ENCODE measurements at regions of chr9 and their contacts with region 1.

Region 1: GRCh38 chr9:20622330-20623020 is at the start of gene MLLT3:
- DNase-seq: peak; percentile 97
- H3K4me3 Mint-ChIP-seq: peak within 1 kb of the TSS; percentile 88
- H3K27ac Mint-ChIP-seq: peak within 1 kb of the TSS; percentile 99
- H3K4me1 Mint-ChIP-seq: peaks cover 52% of the 10 kb centered on the region
- H3K27me3 Mint-ChIP-seq: no peaks in the 10 kb centered on the region
- total RNA-seq, gene MLLT3: 33.8 and 36.4 TPM in 2 replicates

Region 2: DNA sequence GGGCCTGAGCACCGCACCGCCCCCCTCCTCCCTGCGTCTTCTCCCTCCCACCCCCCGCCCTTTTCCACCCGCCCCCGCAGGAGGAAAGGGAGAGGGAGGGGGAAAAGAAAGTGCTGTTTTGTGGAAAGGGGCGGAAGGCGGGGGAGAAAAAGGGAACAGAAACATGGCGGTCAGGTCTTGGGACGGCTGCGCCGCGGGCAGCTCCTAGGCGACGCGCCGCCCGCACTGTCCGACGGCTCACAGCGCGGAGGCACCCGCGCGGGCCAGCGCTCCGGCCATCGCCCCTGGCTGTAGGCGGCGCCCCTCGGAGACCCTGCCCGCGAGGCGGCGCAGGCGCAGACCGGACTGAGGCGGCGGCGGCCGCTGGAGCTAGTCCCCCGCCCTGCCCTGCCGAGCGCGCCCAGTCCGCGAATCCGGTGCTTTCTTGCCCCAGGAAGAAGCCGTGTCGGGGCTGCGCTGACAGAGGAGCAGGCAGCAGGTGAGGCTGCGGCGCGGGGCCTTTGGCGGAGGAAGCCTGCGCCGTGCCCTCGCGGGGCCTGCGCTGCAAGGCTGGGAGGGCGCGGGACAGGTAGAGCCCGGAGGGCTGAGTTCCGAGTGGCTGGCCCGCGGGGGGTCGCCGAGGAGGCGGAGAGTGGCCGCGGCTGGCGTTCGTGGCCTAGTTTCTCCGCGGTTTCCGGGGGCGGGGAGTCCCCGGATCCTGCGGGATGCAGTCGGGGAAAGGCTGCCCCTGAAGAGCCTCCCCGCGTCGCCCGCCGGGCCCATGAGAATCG is 1391.9 kb before region 1 on chr9 and contains the start of gene DENND4C:
- intact Hi-C with region 1: loop called (anchors 2 kb)
- DNase-seq: peak; percentile 83
- H3K4me3 Mint-ChIP-seq: peak within 1 kb of the TSS; percentile 77
- H3K27ac Mint-ChIP-seq: peak within 1 kb of the TSS; percentile 73
- H3K4me1 Mint-ChIP-seq: peaks cover 8% of the 10 kb centered on the region
- H3K27me3 Mint-ChIP-seq: no peaks in the 10 kb centered on the region
- total RNA-seq, gene DENND4C: 18.4 and 21.1 TPM in 2 replicates

Region 3: DNA sequence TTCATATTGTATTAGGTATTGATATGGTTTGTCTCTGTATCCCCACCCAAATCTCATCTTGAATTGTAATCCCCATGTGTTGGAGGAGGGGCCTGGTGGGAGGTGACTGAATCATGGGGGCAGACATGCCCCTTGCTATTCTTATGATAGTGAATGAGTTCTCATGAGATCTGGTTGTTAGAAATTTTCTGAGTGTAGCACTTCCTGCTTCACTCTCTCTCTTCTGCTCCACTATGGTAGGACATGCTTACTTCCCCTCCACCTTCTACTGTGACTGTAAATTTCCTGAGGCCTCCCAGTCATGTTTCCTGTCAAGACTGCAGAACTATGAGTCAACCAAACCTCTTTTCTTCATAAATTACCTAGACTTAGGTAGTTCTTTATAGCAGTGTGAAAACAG is 646.2 kb before region 1 on chr9:
- intact Hi-C with region 1: loop called (anchors 1 kb)
- DNase-seq: peak; percentile 47
- H3K4me3 Mint-ChIP-seq: peak overlapping the region; percentile 1
- H3K27ac Mint-ChIP-seq: peak overlapping the region; percentile 92
- H3K4me1 Mint-ChIP-seq: peaks cover 51% of the 10 kb centered on the region
- H3K27me3 Mint-ChIP-seq: no peaks in the 10 kb centered on the region

Region 4: DNA sequence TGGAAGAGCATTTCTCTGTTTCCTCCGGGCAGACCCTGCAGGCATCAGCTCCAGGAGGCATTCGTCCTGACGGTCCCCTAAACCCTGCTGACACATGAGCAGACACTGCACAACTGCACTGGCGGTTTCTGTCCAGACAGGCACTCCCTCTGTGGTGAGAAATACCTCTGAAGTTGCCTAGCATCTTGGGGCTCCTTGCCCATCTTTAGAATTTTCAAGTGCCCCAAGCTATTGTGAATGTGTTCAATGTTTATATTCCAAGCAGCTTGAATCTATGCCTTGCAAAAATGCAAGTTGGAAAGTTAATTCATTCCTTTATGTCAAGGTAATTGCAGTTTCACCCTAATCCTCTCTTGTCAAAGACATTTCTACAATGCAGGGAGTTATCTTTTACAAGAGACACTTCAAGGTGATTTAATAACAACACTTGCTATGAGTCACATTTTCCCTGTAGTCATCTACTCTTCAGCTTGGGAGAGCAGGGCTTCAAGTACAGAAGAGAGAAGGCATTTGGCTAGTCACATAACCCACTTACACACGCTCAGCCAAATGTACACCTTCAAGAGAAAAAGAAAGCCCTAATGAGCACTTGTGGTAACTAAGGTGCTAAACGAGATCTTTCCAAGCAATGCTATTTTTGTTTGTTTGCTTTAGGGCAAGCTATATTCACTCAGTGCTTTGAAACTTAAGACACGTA is 302.7 kb before region 1 on chr9:
- intact Hi-C with region 1: loop called (anchors 1 kb)
- DNase-seq: peak; percentile 37
- H3K4me3 Mint-ChIP-seq: peak overlapping the region; percentile 35
- H3K27ac Mint-ChIP-seq: peak overlapping the region; percentile 91
- H3K4me1 Mint-ChIP-seq: peaks cover 91% of the 10 kb centered on the region
- H3K27me3 Mint-ChIP-seq: no peaks in the 10 kb centered on the region

Region 5: DNA sequence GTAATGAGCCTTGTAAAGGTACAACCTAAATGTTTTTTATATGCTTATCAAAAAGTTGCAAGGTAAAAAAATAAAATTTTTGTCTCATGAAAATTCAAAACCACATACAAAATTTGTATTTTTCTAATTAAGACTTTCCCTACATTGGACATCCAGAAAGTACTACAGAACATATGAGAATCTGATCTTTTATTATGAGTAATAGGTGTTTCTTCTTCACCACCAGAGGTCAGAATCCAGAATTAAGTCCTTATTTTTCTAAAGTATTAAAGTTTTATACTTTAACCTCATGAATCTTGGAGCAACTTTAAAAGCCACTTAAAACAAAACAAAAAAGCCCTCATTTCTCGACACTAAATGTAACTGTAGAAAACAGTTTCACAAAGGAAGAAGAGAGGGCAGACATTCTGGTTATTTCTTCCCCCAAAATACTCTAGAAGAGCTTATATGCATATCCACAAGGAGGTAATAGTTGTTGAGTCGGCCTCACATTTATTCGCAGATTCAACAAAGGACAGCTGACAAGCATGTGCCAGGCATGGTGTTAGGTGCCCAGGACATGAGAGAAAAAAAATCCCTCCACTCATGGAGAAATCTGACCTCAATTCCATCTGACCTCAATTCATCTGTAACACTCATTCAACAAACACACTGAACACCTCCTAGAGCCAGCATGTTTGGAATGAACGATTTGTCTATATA is 69.5 kb before region 1 on chr9:
- intact Hi-C with region 1: loop called (anchors 1 kb)
- DNase-seq: peak; percentile 1
- H3K4me3 Mint-ChIP-seq: peak overlapping the region; percentile 59
- H3K27ac Mint-ChIP-seq: peak overlapping the region; percentile 64
- H3K4me1 Mint-ChIP-seq: peaks cover 76% of the 10 kb centered on the region
- H3K27me3 Mint-ChIP-seq: no peaks in the 10 kb centered on the region

Region 6: DNA sequence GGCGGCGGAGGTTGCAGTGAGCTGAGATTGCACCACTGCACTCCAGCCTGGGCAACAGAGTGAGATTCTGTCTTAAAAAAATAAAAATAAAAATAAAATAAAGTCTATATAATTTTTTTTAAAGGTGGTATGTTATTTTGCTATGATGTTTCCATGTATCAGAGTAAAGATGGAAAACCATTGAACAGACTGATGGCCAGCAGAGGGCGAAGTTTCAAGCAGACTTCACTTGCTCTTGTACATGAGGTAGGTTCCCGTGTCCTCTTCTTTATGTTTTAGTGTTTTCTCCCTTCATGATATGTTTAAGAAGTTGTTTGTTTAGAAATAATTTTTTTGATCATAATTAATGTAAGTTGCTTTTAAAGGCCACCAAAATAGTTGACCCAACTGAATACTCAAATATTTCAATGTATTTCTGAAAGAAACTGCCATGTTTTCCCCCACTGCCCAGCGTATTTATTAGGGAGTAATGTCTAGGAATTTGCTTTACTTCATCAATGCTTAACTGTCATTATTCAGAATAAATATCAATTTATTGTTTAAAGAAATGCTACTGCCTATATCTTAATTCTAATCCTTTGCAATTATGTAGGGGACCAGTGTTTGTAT is 262.6 kb after region 1 on chr9:
- intact Hi-C with region 1: loop called (anchors 1 kb)
- DNase-seq: peak; percentile 12
- H3K4me3 Mint-ChIP-seq: no peak overlapping the region
- H3K27ac Mint-ChIP-seq: no peak overlapping the region
- H3K4me1 Mint-ChIP-seq: no peaks in the 10 kb centered on the region
- H3K27me3 Mint-ChIP-seq: no peaks in the 10 kb centered on the region

Region 7: DNA sequence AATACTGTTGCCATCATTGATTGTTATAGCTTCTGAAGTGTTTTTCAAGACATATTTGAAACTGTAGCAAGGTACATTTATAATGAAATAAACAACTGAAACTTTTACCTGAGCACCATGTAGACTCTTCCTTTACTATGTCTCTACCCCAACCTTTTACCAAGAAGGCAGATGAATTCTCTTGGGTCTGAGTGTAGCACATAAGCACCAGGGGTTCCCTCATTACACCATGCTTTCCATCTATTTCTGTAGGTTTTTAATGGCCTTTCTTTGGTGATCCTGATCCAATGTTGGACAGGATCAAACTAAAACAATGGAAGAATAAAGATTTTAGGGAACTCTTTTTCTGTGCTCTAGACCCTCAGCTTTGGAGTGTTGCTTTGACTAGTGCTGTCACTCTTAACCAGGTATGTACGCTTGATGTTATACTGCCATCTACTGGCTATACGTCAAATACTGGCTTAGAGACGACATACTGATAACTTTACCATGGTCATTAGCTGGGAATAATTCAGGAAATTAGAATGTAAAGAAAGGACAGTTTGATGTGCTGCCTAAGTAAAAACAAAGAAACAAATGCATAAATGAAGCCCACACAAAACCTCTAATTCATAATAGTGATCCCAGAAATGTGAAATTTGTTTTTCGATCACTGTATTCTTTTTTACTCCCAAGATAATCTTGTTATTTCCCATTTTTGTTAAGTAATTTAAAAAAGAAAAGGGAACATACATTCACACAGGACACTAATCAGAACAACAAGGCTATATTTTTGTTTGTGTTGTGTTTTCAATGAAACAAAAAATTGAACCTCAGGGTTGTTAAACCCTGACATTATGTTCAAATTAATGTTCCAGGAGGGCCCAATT is 488.5 kb after region 1 on chr9:
- intact Hi-C with region 1: loop called (anchors 1 kb)
- DNase-seq: no peak
- H3K4me3 Mint-ChIP-seq: no peak overlapping the region
- H3K27ac Mint-ChIP-seq: no peak overlapping the region
- H3K4me1 Mint-ChIP-seq: no peaks in the 10 kb centered on the region
- H3K27me3 Mint-ChIP-seq: peaks cover 9% of the 10 kb centered on the region